Posterior cingulate gyrus (tissue), 11 donors: ENCODE measurements at regions of chr11 and their contacts with region 1.

Region 1: DNA sequence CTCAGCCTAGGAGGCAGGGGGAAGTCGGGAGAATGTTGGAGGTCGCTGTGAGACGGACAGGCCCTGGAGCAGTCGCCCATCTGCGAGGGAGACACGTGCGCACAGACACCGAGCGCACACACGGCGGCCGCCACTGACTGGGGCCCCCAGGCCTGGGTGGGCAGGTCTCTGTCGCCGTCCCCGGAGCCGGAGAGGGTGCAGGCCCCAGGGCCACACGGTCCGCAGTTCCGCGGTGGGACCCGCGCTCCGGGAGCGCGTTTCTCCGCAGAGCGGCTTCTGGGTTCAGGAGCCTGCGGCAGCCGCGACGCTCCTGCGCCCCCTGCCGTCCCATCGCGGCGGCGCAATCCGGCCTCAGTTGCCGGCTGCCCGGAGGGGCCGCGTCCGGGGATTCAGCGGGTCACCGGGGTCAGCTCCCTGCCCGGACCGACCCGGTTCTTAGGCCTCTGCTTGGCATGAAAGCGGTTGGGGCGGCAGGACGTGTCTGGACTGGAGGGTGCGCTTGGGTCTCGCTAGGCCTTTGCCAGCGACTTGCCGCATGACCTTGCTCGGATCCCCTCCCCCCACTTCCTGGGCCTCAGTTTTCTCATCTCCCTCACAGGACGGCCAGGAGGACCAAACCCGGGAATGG is 31.2 kb downstream of the PDE2A start:
- DNase-seq: peak in 9 of 10 donors; percentile 49 to 95 (median 64)

Region 2: GRCh38 chr11:72483412-72484186 is 159.4 kb before region 1 on chr11:
- intact Hi-C with region 1: loop called (anchors 2 kb)
- DNase-seq: no peak

Region 3: DNA sequence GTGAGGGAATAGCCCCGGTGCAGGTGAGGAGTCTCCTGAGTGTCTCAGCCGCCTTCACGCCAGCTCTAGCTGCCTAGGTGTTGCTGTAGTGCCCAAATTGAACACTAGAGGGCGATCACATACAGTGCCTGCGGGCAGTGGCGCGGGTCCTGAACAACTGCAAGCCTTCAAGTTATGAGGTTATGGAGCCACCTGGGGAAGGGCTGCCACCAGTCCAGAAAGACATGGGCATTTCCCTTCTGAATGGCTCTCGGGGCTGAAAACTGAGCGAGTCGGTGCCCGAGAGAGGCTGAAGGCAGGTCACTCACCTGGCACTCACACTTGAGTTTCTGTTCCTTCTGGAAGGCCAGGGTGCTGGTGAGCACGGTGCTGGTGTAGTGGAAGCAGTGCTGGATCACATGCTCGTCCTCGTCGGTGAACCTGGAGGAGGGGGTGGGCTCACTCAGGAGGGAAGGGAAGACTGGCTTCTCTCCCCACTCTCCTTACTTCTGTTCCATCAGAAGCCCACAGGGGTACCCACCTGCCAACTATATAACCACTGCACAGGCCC is 57.2 kb before region 1 on chr11:
- intact Hi-C with region 1: loop called (anchors 1 kb)
- DNase-seq: peak in 8 of 10 donors; percentile 37 to 93 (median 66)

Region 4: DNA sequence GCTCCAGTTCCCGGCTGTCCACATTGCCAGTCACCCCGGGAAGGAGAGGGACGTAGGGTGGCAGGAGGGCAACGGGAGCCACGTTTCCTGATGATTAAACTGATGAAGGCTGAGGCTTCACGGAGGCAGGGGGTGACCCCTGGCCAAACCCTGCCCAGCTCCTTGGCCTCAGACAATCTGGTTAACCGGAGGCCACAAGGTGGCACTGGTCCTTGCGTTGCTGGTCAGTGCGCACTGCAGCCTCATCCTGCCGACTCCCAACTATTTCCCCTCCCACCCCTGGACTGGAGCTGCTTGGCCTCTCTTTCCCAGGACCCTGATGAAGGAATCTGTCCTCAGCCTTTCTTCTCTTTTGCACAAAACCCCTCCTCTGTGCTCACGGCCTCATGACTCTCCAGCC is 44.1 kb before region 1 on chr11:
- intact Hi-C with region 1: loop called (anchors 2 kb)
- DNase-seq: peak in 8 of 10 donors; percentile 42 to 90 (median 66)

Region 5: DNA sequence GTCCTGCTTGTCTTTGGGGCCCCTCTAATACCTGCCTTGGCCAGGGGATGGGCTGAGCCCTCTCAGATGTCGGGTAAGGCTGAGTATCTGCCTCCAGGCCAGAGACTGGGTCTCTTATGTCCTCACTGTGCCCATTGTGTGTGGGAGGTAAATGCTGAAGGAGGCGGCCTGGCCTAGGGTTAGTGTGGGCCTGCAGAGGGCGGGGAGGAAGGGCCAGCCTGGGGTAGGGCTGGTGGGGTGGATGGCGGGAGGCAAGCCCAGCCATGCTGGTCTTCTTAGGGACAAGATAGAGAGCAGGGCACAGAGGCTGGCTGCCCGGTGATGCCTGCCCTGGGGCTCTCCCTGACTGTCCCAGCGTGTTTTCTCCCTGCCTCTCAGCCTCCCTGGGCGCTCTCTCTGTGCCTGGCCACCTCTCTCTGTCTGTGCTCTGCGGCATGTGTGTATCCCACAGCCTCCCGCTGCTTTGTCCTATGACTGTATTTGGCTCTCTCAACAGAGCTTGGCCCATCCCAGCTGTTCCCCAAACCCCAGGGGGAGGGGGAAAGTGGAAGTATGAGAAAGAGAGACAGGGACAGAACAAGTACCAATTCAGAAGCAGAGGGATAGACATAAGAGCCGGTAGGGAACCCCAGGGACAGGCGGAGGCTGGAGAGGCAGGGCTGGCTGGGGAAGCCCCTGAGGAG is 25.8 kb before region 1 on chr11:
- intact Hi-C with region 1: no loop called
- DNase-seq: peak in 7 of 10 donors; percentile 47 to 93 (median 69)